Cardiac septum (tissue), 1 donor: ENCODE measurements at regions of chr7 and their contacts with region 1.

Region 1: DNA sequence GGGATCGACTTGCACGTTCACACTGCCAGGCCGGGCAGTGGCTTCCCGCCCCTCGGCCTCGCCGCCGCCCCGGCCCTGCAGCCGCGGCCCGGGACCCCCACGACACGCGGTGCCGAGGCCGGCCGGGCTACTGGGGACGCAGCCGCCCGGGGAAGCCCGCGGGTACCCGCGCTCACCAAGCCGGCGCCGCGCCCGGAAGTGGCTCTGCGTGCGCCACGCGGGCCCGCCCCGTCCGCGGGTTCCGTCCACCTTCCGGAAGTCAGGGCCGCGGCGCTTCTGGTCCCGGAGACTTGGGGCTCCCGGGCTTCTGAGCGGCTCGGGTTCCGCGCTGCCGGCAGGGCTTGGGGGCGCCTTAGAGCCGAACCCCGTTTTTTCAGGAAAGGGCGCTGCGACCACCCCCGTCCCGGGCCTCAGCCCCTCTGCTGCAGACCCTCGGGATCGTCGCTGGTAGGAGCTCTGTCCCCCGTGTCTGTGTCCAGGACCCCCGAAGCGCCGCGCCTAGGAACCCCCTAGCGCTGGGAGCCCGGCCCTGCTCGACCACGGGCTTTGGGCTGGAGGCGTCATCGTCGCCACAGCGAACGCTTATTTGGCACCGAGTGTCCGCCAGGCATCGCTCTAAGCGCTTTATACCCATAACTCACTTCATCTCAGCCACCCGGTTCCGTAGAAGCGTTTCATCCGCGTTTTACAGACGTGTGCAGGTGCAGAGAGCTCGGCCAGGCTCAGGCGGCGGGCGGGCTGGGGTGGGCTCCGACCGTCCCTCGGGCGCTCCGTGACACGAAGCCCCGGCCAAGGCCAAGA is at the start of gene PSMG3:
- DNase-seq: peak; percentile 95
- total RNA-seq, gene PSMG3: 12.1 TPM

Region 2: GRCh38 chr7:1503816-1504775 is 65.9 kb before region 1 on chr7 and contains the start of gene INTS1:
- intact Hi-C with region 1: loop called (anchors 5 kb)
- DNase-seq: peak; percentile 97
- total RNA-seq, gene INTS1: 54.7 TPM

Region 3: GRCh38 chr7:1537535-1538412 is 32.3 kb before region 1 on chr7:
- intact Hi-C with region 1: loop called (anchors 2 kb)
- DNase-seq: peak; percentile 94

Region 4: GRCh38 chr7:2314209-2314955 is 744.3 kb after region 1 on chr7 and contains the start of gene SNX8:
- intact Hi-C with region 1: loop called (anchors 10 kb)
- DNase-seq: peak; percentile 96
- total RNA-seq, gene SNX8: 18.9 TPM

Region 5: GRCh38 chr7:2354186-2354938 is 784.3 kb after region 1 on chr7 and contains the start of gene EIF3B:
- intact Hi-C with region 1: loop called (anchors 10 kb)
- DNase-seq: peak; percentile 92
- total RNA-seq, gene EIF3B: 64.9 TPM